ENCODE measurements at regions of chr6 and their contacts with region 1.

Region 1: GRCh38 chr6:152218880-152219279 is 411.4 kb downstream of the ESR1 start:
- DNase-seq: no peak
- ATAC-seq: no peak
- H3K4me3 ChIP-seq: no peak overlapping the region
- H3K27ac ChIP-seq: no peak overlapping the region
- H3K4me1 ChIP-seq: no peaks in the 10 kb centered on the region
- H3K27me3 ChIP-seq: no peaks in the 10 kb centered on the region
- CTCF ChIP-seq: no peak

Region 2: GRCh38 chr6:151958331-151958730 is 260.5 kb before region 1 on chr6:
- CTCF ChIA-PET with region 1: no interaction called
- POLR2A ChIA-PET with region 1: interaction called, 10 read pairs
- in situ Hi-C with region 1: no loop called
- intact Hi-C with region 1: no loop called
- DNase-seq: no peak
- ATAC-seq: no peak
- H3K4me3 ChIP-seq: no peak overlapping the region
- H3K27ac ChIP-seq: no peak overlapping the region
- H3K4me1 ChIP-seq: no peaks in the 10 kb centered on the region
- H3K27me3 ChIP-seq: no peaks in the 10 kb centered on the region
- CTCF ChIP-seq: no peak

Region 3: DNA sequence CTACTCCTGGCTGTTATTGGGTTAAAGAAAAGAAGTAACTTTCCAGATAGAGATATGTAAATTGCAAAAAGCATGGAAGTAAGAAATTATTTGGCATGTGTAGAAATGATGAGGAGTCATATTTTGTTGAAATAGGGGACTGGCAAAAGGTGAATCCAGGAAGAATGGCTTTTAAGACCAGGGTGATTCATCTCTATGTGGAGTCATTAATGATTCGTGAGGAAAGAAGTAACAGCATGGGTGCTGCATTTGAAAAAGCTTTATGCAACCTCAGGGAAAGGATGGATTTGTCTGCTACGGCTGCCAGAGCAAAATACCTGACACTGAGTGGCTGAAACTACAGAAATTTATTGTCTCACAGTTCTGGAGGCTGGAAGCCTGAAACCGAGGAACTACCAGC is 433.1 kb after region 1 on chr6:
- CTCF ChIA-PET with region 1: no interaction called
- POLR2A ChIA-PET with region 1: no interaction called
- in situ Hi-C with region 1: no loop called
- intact Hi-C with region 1: no loop called
- DNase-seq: no peak
- ATAC-seq: no peak
- H3K4me3 ChIP-seq: no peak overlapping the region
- H3K27ac ChIP-seq: no peak overlapping the region
- H3K4me1 ChIP-seq: no peaks in the 10 kb centered on the region
- H3K27me3 ChIP-seq: 0 out of 2 replicates have a peak, but pooled peaks cover 2% of the 10 kb centered on the region
- CTCF ChIP-seq: no peak